ENCODE measurements at regions of chr12 and their contacts with region 1.

Region 1: GRCh38 chr12:99553459-99553858 is 94.1 kb upstream of the GARIN6 start:
- DNase-seq: no peak

Region 2: DNA sequence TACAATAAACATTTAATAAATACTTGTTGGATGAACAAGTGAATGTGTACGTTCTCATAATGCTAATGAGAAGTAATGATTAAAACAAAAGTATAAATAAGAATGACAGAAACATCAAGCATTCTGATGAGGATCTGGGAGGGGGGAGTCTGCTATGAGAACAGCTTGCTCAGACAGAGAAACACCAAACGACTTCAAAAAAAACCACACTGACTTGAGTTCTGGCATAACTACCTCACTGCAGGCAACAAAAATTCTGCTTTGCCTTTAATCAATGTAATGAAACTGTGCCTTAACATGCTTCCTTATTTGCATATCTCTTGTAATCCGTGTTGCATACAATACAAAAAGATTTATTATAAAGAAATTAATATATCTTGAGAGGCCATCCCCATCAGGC is 201.2 kb before region 1 on chr12:
- intact Hi-C with region 1: no loop called
- DNase-seq: no peak

Region 3: GRCh38 chr12:100243137-100243536 is 689.7 kb after region 1 on chr12:
- intact Hi-C with region 1: loop called in 1 of 2 experiments (anchors 5 kb)
- DNase-seq: no peak

Measured in posterior vena cava (tissue), 2 donors.